AG04450 (cell line): ENCODE measurements at regions of chr9 and their contacts with region 1.

Region 1: GRCh38 chr9:134660407-134660806 is 18.8 kb downstream of the COL5A1 start:
- DNase-seq: no peak
- H3K4me3 ChIP-seq: no peak overlapping the region
- H3K27ac ChIP-seq: no peak overlapping the region
- H3K27me3 ChIP-seq: no peaks in the 10 kb centered on the region
- CTCF ChIP-seq: peak; percentile 79

Region 2: DNA sequence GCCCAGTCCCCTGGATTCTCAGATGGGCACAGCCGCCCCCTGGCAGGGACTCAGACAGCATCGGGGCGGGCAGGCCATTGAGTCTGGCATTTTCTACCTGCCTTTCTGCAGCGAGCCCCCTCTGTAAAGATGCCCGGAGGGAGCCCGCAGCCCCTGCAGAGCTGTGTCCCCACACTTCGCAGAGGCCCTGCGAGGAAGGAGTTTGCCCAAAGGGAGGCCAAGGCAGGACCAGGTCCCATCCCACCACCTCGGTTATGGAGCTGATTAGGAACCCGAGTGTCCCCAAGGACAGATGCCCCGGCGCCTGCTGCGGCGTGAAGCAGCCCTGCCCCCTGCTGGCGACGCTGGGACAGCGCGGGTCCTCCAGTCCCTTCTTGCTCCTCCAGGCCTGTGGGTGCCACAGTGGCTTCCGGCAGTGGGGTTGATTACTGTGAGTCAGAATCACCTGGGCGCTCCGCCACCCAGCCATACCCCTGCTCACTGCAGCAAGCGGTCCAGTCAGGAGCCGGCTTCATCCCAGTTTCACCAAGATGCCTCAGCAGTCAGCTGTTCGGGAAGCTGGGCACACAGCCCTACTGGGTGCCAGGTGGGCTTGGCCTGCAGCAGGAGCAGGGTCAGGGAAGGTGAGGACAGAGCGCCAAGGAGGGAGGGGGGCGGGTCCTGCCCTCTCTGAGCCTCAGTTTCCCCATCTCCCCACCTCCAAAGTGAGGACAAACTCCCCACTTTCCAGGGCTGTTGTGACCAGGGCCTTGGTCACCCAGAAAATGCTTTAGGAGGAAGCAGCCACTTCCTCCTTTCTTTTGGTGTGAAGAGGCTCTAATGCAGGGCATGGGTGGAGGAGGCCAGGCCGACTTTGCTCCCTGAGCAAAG is 217.0 kb before region 1 on chr9:
- CTCF ChIA-PET with region 1: interaction called, 13 read pairs
- POLR2A ChIA-PET with region 1: no interaction called
- DNase-seq: peak; percentile 78
- H3K4me3 ChIP-seq: no peak overlapping the region
- H3K27ac ChIP-seq: no peak overlapping the region
- H3K27me3 ChIP-seq: peaks cover 3% of the 10 kb centered on the region
- CTCF ChIP-seq: peak; percentile 95

Region 3: GRCh38 chr9:134641173-134641985 is 19.0 kb before region 1 on chr9 and contains the start of gene COL5A1:
- CTCF ChIA-PET with region 1: interaction called, 4 read pairs
- POLR2A ChIA-PET with region 1: interaction called, 24 read pairs
- DNase-seq: peak; percentile 74
- H3K4me3 ChIP-seq: peak within 1 kb of the TSS; percentile 85
- H3K27ac ChIP-seq: peak within 1 kb of the TSS; percentile 91
- H3K27me3 ChIP-seq: no peaks in the 10 kb centered on the region
- CTCF ChIP-seq: no peak; the same call in 1 of the 2 replicates
- polyA plus RNA-seq, gene COL5A1: 73.3 and 91.7 TPM in 2 replicates

Region 4: DNA sequence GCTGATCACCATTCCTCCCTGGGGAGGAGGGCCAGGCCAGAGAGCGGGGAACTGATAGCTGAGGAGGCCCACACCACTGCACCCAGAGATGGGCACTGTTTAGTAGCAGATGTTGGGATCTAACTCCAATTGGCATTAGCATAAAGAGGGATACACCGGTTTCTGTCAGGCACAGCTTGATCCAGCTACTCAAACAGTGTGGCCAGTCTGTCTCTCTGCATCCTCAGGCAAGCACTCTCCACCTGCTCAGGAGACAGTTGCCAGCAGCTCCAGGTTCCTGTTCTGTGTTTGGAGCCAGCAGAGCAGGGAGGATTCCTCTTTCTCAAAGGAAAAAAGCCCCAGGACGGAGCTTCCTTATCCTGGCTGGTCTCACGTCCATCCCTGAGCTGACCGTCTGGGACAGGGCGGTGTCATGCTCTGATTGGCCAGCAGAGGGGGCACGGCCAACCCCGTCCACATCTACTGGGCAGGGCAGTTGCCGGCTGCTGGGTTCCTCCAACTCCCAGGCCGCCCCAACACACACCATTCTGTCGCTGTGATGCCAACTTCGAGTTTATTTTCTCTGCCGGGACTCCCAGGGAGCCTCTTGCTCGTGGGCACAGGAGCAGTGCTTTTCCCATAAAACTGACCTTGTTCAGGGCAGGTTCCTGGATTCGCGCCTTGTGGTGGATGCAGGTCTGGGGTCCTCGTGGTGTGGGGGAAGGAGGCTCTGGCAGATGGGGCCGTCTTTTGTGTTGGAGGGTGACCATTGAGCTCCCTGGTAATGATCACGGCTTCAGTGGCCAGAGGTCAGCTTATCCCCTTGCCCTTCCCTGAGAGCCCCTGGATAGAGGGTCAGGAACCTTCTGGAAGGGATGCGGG is 29.1 kb after region 1 on chr9:
- CTCF ChIA-PET with region 1: interaction called, 10 read pairs
- POLR2A ChIA-PET with region 1: no interaction called
- DNase-seq: peak; percentile 21
- H3K4me3 ChIP-seq: no peak overlapping the region
- H3K27ac ChIP-seq: peak overlapping the region; percentile 31
- H3K27me3 ChIP-seq: no peaks in the 10 kb centered on the region
- CTCF ChIP-seq: peak; percentile 86